IMR-90 (cell line): ENCODE measurements at regions of chr18 and their contacts with region 1.

Region 1: GRCh38 chr18:36688020-36688965 is 140.5 kb downstream of the TPGS2 start:
- DNase-seq: peak; percentile 74
- ATAC-seq: peak; percentile 63
- H3K4me3 ChIP-seq: no peak overlapping the region
- H3K27ac ChIP-seq: no peak overlapping the region
- H3K4me1 ChIP-seq: peaks cover 27% of the 10 kb centered on the region
- H3K27me3 ChIP-seq: no peaks in the 10 kb centered on the region
- CTCF ChIP-seq: peak; percentile 86
- POLR2A ChIP-seq: no peak
- RAD21 ChIP-seq: peak; percentile 80

Region 2: DNA sequence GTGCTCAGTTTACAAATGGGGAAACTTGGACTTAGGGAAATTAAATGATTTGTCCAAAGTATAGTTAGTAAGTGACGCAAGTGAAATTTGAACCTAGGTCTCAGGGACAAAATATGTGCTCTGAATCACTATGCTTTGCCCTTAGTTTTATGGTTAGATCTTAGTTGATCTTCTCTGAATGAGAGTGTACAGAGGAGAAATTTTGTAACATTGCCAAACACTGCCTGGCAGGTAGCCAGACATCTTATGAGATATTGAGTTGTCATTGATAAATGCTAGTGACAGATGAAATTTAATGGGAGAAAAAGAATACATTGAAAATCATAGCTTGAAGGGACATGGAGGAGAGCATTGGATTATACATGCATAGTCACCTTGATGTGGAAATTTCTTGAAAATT is 1015.4 kb before region 1 on chr18:
- CTCF ChIA-PET with region 1: no interaction called
- POLR2A ChIA-PET with region 1: no interaction called
- dilution Hi-C with region 1: no loop called
- in situ Hi-C with region 1: no loop called
- intact Hi-C with region 1: no loop called
- DNase-seq: peak; percentile 77
- ATAC-seq: peak; percentile 75
- H3K4me3 ChIP-seq: no peak overlapping the region
- H3K27ac ChIP-seq: no peak overlapping the region
- H3K4me1 ChIP-seq: peaks cover 1% of the 10 kb centered on the region; the same call in 1 of the 2 replicates
- H3K27me3 ChIP-seq: no peaks in the 10 kb centered on the region
- CTCF ChIP-seq: no peak
- POLR2A ChIP-seq: no peak
- RAD21 ChIP-seq: no peak

Region 3: GRCh38 chr18:36578871-36579710 is 109.2 kb before region 1 on chr18:
- CTCF ChIA-PET with region 1: interaction called, 3 read pairs
- POLR2A ChIA-PET with region 1: no interaction called
- dilution Hi-C with region 1: no loop called
- in situ Hi-C with region 1: no loop called
- intact Hi-C with region 1: loop called (anchors 2 kb)
- DNase-seq: peak; percentile 62
- ATAC-seq: peak; percentile 15; the same call in 1 of the 2 replicates
- H3K4me3 ChIP-seq: no peak overlapping the region
- H3K27ac ChIP-seq: peak overlapping the region; percentile 89
- H3K4me1 ChIP-seq: peaks cover 28% of the 10 kb centered on the region
- H3K27me3 ChIP-seq: no peaks in the 10 kb centered on the region
- CTCF ChIP-seq: no peak
- POLR2A ChIP-seq: no peak
- RAD21 ChIP-seq: no peak

Region 4: DNA sequence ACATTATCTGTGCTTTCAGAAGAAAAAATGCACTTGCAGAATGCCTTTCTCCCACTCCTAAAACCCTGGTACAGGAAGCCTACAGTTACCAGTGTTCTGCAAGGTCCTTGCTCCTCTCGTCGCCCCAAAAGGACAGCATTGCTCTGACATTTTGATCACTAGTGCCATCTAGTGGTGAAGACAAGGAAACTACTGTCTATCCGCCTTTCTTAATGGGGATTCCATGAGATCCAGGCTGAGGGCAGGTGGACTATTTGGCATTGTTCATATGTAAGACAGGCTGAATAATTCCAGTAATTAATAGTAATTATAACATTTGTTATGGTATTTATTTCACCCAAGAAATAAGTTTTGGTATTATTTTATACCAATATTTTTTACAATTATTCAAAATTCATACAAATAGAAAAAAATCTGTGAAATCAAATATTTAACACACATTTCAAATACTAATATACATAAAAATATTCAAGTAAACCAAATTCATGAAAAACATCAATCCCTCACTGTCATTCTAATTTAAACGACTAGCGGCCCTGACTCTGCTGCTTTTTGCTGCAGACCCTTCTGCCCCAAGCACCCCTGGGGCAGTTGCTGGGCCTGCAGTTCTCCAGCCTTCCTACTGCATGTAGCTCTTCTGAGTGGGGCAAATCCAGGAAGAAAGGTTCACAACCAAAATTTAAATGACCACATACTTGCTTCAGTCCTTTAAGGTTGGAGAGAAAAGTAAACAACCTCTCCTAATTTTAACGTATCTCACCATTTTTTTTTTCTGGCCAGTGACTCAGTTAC is 121.5 kb after region 1 on chr18:
- CTCF ChIA-PET with region 1: interaction called, 8 read pairs
- POLR2A ChIA-PET with region 1: no interaction called
- dilution Hi-C with region 1: no loop called
- in situ Hi-C with region 1: no loop called
- intact Hi-C with region 1: loop called (anchors 2 kb)
- DNase-seq: peak; percentile 79
- ATAC-seq: peak; percentile 70
- H3K4me3 ChIP-seq: no peak overlapping the region
- H3K27ac ChIP-seq: no peak overlapping the region
- H3K4me1 ChIP-seq: peaks cover 17% of the 10 kb centered on the region
- H3K27me3 ChIP-seq: no peaks in the 10 kb centered on the region
- CTCF ChIP-seq: peak; percentile 75
- POLR2A ChIP-seq: no peak
- RAD21 ChIP-seq: peak; percentile 73